Right ventricle myocardium superior (tissue), 1 donor: ENCODE measurements at regions of chr6 and their contacts with region 1.

Region 1: DNA sequence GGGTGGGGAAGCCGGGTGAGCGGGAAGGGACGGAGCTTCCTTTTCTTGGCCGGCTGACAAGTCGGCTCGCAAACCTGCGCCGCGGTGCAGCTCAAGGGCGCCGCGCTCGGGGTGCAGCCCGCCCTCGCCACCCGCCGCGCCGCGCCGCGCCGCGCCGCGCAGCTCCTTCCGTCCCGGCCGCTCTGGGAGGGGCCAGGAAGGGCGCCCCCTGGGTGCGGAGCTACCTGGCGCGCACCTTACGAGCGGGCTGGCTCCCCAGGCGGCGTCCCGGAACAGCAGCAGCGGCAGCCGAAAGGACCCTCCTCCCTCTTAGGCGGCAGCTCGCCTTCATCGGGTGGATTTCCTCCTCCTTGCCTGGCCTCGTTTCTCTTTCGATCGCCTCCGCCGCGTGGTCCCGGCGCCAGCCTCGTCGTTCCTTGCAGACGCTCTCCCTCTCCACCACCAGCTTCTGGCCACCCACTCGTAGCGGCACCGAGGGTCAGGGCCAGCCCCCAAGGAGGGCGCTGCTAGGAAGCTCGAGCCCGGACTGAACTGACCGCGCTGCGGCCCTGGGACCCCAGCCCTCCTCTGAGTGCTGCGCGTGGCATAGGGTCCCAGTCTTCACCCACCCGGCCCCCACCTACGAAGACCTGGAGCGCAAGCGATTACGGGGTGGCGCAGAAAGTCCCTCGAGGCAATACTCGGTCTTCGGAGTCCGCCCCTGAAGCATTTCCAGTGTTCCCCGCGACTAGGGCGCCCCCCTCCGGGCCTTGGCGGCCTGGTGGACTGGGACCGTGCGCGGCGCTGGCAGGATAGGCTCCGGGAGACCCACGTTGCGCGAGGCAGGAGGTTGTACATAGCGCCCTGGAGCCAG is at the start of gene MAP3K5:
- DNase-seq: peak; percentile 96
- ATAC-seq: peak; percentile 92
- total RNA-seq, gene MAP3K5: 39.9 TPM

Region 2: DNA sequence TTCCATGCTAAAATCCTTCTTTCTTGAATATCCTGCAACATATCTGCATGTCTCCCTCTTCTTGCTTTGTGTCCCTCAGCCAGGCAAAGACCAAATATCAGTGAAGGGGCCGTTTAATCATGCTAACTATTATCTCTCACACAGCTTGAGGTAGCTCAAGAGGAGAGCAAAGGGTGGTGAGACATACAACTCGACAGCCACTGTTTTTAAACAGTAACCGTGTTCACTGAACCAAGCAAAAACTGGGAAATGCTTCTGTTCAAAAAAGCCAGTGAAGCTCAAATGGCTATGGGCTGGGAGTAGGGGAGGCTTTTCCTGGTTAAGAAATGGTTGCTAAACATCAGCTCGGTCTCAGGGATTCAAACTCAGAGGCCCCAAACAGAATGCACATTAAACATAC is 325.9 kb before region 1 on chr6:
- intact Hi-C with region 1: no loop called
- DNase-seq: no peak
- ATAC-seq: no peak

Region 3: DNA sequence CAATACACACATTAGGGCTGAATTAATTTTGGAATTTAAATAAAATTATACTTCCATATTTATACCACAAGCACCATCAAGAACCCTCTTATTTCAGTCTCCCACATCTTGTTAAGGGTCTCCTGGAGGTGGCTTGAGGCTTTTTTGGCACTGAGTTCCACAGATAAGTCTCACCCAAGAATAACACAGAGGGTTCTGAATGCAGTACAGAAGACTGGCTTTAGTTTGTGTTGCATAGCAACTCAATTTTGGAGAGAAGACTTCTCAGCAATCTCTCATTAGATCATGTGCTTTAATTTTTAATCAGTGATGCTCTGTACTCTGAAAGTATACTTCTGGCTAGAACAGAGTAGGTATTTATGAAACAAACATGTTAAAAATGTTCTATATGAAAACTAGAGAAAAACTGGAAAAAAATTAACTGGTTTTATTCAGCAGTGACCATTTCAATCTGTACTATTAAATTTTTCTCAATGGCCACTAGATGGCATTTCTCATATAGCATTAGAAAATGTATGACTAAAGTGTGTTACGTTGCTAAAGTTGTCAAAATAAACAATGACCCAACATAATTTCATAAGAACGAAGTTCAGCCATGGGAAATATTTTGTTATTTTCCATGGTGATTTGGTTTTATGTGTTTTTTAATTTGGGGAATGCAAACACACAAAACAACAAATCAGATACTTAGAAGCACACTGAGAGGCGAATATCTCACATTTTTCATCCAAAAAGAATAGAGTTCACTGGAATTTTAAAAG is 209.7 kb before region 1 on chr6:
- intact Hi-C with region 1: loop called (anchors 5 kb)
- DNase-seq: no peak
- ATAC-seq: peak; percentile 55

Region 4: DNA sequence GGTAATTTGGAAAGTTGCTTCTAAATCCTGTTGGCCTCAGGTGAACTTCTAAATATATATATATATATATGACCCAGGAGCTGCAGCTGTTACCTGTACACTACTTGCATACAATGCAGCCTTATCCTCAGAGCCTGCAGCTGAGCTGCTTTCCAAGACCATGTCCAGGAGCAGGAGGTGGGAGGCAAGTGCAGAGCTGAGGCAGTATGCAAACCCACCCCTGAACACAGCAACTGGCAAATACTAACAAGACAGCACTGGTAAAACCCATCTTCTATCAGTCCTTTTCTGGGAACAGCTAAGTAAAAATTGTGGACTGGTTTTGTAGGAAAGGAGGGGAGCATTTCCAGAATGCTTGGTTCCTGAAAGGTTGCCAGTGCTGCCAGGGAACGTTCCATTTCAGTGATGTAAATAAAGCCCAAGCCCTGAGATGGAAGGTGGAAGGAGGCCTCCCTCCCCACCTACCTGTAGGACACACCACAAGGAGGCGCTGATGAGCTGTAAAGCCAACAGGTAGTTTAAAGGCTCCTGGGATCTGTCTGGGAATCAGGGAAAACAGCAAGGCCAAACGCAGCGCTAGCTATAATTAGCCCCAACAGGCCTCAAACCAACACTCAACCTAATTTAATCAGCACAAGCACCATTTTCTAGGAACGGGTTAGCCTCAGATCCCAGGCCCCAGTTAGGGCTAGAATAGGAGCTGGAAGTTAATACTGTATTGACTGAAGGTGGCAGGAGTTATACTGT is 148.6 kb before region 1 on chr6:
- intact Hi-C with region 1: loop called (anchors 2 kb)
- DNase-seq: peak; percentile 91
- ATAC-seq: peak; percentile 94

Region 5: DNA sequence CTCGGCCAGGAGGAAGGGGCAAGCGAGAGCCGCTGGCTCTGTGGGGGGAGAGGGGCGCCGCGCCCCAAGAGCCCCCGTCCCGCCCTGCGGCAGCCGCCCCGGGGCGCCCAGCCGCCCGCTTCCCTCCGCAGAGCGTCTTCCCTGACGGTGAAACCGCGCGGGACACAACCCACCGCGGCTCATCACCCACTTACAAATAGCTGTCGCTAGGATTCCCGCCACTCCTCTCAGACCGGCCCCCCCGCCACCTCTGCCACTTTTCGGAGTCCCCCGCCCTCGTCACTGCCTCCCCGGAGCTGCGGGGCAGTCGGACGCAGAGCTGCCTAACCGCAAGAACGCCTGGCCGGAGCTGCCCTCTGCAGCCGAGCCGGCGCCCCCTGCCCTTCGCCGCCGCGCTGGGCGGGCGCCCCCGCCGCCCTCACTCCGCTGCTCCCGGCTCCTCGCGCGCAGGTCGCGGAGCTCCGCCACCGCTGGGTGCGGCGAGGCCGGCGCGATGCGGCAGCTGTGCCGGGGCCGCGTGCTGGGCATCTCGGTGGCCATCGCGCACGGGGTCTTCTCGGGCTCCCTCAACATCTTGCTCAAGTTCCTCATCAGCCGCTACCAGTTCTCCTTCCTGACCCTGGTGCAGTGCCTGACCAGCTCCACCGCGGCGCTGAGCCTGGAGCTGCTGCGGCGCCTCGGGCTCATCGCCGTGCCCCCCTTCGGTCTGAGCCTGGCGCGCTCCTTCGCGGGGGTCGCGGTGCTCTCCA is 129.5 kb after region 1 on chr6 and contains the start of gene SLC35D3:
- intact Hi-C with region 1: no loop called
- DNase-seq: no peak
- ATAC-seq: peak; percentile 33
- total RNA-seq, gene SLC35D3: not detected